MCF 10A (cell line): ENCODE measurements at regions of chr7 and their contacts with region 1.

Region 1: GRCh38 chr7:76314042-76314721 is 11.7 kb downstream of the HSPB1 start:
- DNase-seq: peak; percentile 92
- H3K4me3 Mint-ChIP-seq: no peak overlapping the region
- H3K27ac Mint-ChIP-seq: no peak overlapping the region
- H3K4me1 Mint-ChIP-seq: peaks cover 28% of the 10 kb centered on the region
- H3K27me3 Mint-ChIP-seq: no peaks in the 10 kb centered on the region
- CTCF ChIP-seq: peak; percentile 100

Region 2: GRCh38 chr7:76179686-76180085 is 134.5 kb before region 1 on chr7:
- CTCF ChIA-PET with region 1: interaction called, 201 read pairs
- POLR2A ChIA-PET with region 1: interaction called, 17 read pairs
- intact Hi-C with region 1: loop called (anchors 1 kb)
- DNase-seq: no peak
- H3K4me3 Mint-ChIP-seq: no peak overlapping the region
- H3K27ac Mint-ChIP-seq: no peak overlapping the region
- H3K4me1 Mint-ChIP-seq: no peaks in the 10 kb centered on the region
- H3K27me3 Mint-ChIP-seq: no peaks in the 10 kb centered on the region
- CTCF ChIP-seq: no peak

Region 3: DNA sequence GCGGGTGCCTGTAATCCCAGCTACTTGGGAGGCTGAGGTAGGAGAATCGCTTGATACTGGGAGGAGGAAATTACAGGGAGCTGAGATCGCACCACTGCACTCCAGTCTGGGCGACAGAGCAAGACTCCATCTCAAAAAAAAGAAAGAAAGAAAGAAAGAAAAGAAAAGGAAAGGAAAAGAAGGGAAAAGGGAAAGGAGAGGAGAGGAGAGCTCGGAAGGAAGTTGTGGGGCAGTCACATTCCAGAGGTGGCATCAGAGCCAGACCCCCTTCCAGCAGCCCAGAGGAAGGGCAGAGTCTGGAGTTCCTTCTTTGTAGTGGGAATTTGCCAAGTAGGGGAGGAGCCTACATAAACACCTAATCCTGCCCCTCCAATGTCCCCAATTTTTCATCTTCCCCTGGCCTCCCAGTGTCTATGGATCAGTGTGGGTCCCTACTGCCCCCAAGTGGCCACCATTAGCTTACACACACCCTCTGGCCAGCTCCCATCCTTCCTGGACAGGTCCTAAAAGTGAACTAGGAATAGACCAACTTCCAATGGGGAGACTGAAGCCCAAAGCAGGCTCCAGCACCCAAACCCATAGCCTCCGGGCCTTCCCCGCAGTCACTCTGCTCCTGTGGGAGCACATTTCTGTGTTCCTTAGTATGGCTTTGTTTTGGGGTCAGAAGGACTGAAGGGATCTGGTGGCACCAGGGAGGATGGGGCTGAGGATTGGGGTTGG is 51.3 kb before region 1 on chr7:
- CTCF ChIA-PET with region 1: interaction called, 15 read pairs
- POLR2A ChIA-PET with region 1: no interaction called
- intact Hi-C with region 1: no loop called
- DNase-seq: peak; percentile 73
- H3K4me3 Mint-ChIP-seq: no peak overlapping the region
- H3K27ac Mint-ChIP-seq: peak overlapping the region; percentile 36
- H3K4me1 Mint-ChIP-seq: no peaks in the 10 kb centered on the region
- H3K27me3 Mint-ChIP-seq: peaks cover under 1% of the 10 kb centered on the region
- CTCF ChIP-seq: peak; percentile 75

Region 4: GRCh38 chr7:76291343-76292212 is 22.6 kb before region 1 on chr7:
- CTCF ChIA-PET with region 1: interaction called, 232 read pairs
- POLR2A ChIA-PET with region 1: interaction called, 283 read pairs
- intact Hi-C with region 1: loop called (anchors 1 kb)
- DNase-seq: peak; percentile 99
- H3K4me3 Mint-ChIP-seq: peak overlapping the region; percentile 29
- H3K27ac Mint-ChIP-seq: peak overlapping the region; percentile 84
- H3K4me1 Mint-ChIP-seq: peaks cover 41% of the 10 kb centered on the region
- H3K27me3 Mint-ChIP-seq: no peaks in the 10 kb centered on the region
- CTCF ChIP-seq: peak; percentile 89

Region 5: DNA sequence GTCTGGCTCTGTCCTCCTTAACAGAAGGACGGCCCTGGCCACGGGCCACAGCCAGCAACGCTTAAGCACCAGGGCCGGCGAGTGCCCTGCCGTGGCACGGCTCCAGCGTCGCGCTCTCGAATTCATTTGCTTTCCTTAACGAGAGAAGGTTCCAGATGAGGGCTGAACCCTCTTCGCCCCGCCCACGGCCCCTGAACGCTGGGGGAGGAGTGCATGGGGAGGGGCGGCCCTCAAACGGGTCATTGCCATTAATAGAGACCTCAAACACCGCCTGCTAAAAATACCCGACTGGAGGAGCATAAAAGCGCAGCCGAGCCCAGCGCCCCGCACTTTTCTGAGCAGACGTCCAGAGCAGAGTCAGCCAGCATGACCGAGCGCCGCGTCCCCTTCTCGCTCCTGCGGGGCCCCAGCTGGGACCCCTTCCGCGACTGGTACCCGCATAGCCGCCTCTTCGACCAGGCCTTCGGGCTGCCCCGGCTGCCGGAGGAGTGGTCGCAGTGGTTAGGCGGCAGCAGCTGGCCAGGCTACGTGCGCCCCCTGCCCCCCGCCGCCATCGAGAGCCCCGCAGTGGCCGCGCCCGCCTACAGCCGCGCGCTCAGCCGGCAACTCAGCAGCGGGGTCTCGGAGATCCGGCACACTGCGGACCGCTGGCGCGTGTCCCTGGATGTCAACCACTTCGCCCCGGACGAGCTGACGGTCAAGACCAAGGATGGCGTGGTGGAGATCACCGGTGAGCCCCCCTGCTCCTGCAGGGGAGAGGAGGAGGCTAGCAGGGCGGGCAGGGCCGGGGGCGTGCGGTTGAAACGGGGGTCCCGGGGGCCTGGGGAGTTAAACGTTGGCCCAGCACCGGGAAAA is 11.6 kb before region 1 on chr7 and contains the start of gene HSPB1:
- CTCF ChIA-PET with region 1: interaction called, 232 read pairs
- POLR2A ChIA-PET with region 1: interaction called, 283 read pairs
- intact Hi-C with region 1: no loop called
- DNase-seq: peak; percentile 95
- H3K4me3 Mint-ChIP-seq: peak within 1 kb of the TSS; percentile 85
- H3K27ac Mint-ChIP-seq: peak within 1 kb of the TSS; percentile 81
- H3K4me1 Mint-ChIP-seq: peaks cover 34% of the 10 kb centered on the region
- H3K27me3 Mint-ChIP-seq: no peaks in the 10 kb centered on the region
- CTCF ChIP-seq: no peak
- total RNA-seq, gene HSPB1: 158 and 198 TPM in 2 replicates

Region 6: GRCh38 chr7:76340617-76341131 is 26.5 kb after region 1 on chr7:
- CTCF ChIA-PET with region 1: interaction called, 3 read pairs
- POLR2A ChIA-PET with region 1: interaction called, 11 read pairs
- intact Hi-C with region 1: no loop called
- DNase-seq: peak; percentile 40
- H3K4me3 Mint-ChIP-seq: no peak overlapping the region
- H3K27ac Mint-ChIP-seq: no peak overlapping the region
- H3K4me1 Mint-ChIP-seq: peaks cover 60% of the 10 kb centered on the region
- H3K27me3 Mint-ChIP-seq: no peaks in the 10 kb centered on the region
- CTCF ChIP-seq: no peak

Region 7: GRCh38 chr7:76424721-76425511 is 110.7 kb after region 1 on chr7 and contains the start of gene ZP3:
- CTCF ChIA-PET with region 1: no interaction called
- POLR2A ChIA-PET with region 1: interaction called, 15 read pairs
- intact Hi-C with region 1: no loop called
- DNase-seq: no peak
- H3K4me3 Mint-ChIP-seq: peak within 1 kb of the TSS; percentile 1
- H3K27ac Mint-ChIP-seq: peak within 1 kb of the TSS; percentile 86
- H3K4me1 Mint-ChIP-seq: peaks cover 21% of the 10 kb centered on the region
- H3K27me3 Mint-ChIP-seq: no peaks in the 10 kb centered on the region
- CTCF ChIP-seq: no peak
- total RNA-seq, gene ZP3: 5.6 TPM in 2 replicates